CD4-positive, alpha-beta memory T cell (primary cell): ENCODE measurements at regions of chr7 and their contacts with region 1.

Region 1: DNA sequence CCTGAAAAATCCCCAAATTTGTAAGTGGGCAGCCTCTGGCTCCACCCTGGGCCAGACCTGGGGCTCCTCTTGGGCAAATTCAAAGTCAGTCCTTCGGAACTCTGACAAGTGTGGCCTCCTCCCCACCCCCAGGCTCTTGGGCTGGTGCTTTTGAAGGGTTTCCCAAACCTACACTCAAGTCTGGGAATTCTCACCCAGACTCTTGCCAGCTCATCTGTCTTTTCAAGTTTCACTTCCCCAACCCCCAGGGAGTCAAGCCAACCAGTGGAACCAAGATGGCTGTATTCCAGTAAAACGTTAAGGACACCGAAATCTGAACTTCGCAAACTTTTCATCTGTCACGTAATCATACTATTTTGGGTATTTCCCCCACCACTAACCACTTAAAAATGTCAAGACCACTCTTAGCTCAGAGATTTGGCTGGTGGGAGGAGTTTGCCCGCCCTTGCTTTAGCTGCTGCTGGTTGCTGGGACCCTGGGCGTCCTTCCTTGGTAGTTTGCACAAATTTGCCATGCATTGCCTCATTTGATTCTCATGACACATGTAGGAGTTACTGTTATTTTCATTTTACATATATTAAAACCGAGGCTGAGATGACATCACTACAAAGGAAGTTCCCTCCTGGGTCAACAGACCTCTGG is 1.7 kb upstream of the MYO1G start:
- DNase-seq: peak; percentile 51 to 96 (median 64)
- H3K4me3 ChIP-seq: peak overlapping the region in 1 of 2 donors; percentile 2
- H3K4me3 Mint-ChIP-seq: peak overlapping the region; percentile 52 to 99 (median 97)
- H3K27ac ChIP-seq: peak overlapping the region; percentile 85
- H3K27ac Mint-ChIP-seq: peak overlapping the region; percentile 96 to 99 (median 98)
- H3K4me1 ChIP-seq: peaks cover 78% of the 10 kb centered on the region
- H3K4me1 Mint-ChIP-seq: peaks cover 49 to 100% (median 70%) of the 10 kb centered on the region in 4 donors
- H3K27me3 ChIP-seq: no peaks in the 10 kb centered on the region
- H3K27me3 Mint-ChIP-seq: no peaks in the 10 kb centered on the region

Region 2: DNA sequence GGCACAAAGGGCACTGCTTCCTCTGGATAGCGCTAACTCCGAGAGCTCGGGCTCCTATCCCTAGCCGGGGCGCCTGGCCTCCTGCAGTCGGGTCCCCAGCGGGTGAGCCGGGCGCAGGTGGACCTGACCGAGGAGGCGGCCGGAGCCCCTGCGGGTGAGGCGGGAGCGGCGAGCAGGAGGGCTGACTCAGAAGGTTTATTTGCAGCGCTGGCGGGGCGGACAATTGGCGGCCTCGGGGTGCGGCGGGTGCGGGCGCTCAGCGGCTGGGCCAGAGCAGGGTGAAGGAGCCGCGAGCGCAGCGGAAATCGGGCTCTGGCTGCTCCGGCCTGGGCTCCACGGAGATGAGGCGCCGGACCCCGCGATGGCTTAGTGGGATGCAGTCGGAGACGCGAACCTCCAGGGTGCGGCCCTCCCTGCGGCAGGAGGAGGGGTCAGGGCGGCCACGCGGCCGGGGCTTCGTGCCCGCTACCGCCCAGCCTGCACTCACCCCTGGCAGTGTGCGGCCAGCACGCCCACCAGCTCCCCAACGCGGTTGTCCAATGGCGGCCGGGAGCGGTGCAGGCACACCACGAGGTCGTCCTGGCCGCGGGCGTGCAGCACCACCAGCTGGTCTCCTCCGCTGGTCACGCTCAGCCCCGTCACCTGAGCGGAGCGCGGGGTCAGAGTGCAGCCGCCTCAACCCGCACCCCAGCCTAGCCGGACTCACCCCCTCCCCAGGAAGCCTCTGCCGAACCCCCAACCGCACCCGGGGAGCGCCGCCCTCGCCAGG is 17.8 kb before region 1 on chr7:
- CTCF ChIA-PET with region 1: interaction called, 3 read pairs
- POLR2A ChIA-PET with region 1: interaction called, 23 read pairs
- intact Hi-C with region 1: no loop called
- DNase-seq: no peak
- H3K4me3 ChIP-seq: no peak overlapping the region
- H3K4me3 Mint-ChIP-seq: no peak overlapping the region
- H3K27ac ChIP-seq: peak overlapping the region; percentile 26
- H3K27ac Mint-ChIP-seq: peak overlapping the region in 1 of 7 donors; percentile 79
- H3K4me1 ChIP-seq: peaks cover 19% of the 10 kb centered on the region
- H3K4me1 Mint-ChIP-seq: peaks cover 13 to 21% (median 18%) of the 10 kb centered on the region in 4 donors
- H3K27me3 ChIP-seq: no peaks in the 10 kb centered on the region
- H3K27me3 Mint-ChIP-seq: no peaks in the 10 kb centered on the region

Region 3: DNA sequence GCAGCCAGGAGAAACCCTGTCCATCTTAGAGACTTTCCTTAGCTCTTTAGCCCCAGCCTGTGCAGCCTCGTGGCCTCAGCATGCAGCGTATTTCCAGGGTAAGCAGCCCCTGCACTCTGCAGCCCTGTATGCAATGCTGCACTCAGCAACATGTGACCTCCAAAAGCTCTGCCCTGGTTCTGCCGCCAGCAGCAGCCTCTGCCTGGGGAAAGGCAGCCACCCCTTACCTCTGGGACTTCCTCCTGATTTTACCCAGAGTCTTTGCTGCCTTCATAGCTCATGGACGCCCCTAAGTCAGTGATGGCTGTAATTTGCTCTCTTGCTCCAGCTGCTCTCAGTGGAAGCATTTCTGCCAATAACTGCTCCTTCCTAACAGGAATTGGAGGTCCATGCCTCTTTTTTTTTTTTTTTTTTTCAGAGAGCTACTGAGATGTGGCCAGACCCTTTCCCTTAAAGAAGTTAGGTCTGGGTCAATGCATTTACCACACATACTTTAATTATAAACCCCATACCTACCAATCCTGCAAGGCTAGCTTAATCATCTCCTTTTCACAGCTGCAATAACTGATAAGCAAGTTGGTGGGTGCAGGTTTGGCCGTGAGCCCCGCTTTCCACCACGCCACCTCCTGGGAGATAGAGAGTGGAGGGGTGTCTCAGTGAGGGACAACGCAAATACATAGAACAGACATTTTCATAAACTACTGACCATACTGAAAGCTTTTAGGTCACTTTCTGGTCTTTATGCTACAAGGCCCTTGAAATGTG is 248.8 kb after region 1 on chr7:
- CTCF ChIA-PET with region 1: no interaction called
- POLR2A ChIA-PET with region 1: no interaction called
- intact Hi-C with region 1: no loop called
- DNase-seq: no peak
- H3K4me3 ChIP-seq: no peak overlapping the region
- H3K4me3 Mint-ChIP-seq: no peak overlapping the region
- H3K27ac ChIP-seq: no peak overlapping the region
- H3K27ac Mint-ChIP-seq: no peak overlapping the region
- H3K4me1 ChIP-seq: no peaks in the 10 kb centered on the region
- H3K4me1 Mint-ChIP-seq: peaks cover 0 to 5% (median under 1%) of the 10 kb centered on the region in 4 donors
- H3K27me3 ChIP-seq: peaks cover 6% of the 10 kb centered on the region
- H3K27me3 Mint-ChIP-seq: peaks cover 16 to 19% of the 10 kb centered on the region in 2 donors